ENCODE measurements at regions of chr7 and their contacts with region 1.

Region 1: GRCh38 chr7:99386584-99387238 is 12.2 kb downstream of the ARPC1B start:
- DNase-seq: peak in 2 of 4 experiments; percentile 62 to 74
- ATAC-seq: peak; percentile 93
- H3K4me3 ChIP-seq: no peak overlapping the region
- H3K27ac ChIP-seq: no peak overlapping the region
- H3K4me1 ChIP-seq: peaks cover 0 to 27% of the 10 kb centered on the region in 2 experiments; a peak in 2 of 5 replicates
- H3K27me3 ChIP-seq: no peaks in the 10 kb centered on the region
- CTCF ChIP-seq: peak; percentile 69 to 81 (median 72)
- EP300 ChIP-seq: no peak
- POLR2A ChIP-seq: no peak
- RAD21 ChIP-seq: peak; percentile 71 to 81

Region 2: GRCh38 chr7:99005776-99006175 is 380.9 kb before region 1 on chr7:
- CTCF ChIA-PET with region 1: no interaction called
- POLR2A ChIA-PET with region 1: no interaction called
- in situ Hi-C with region 1: no loop called
- intact Hi-C with region 1: no loop called
- DNase-seq: no peak
- ATAC-seq: no peak
- H3K4me3 ChIP-seq: no peak overlapping the region
- H3K27ac ChIP-seq: no peak overlapping the region
- H3K4me1 ChIP-seq: no peaks in the 10 kb centered on the region
- H3K27me3 ChIP-seq: no peaks in the 10 kb centered on the region
- CTCF ChIP-seq: no peak
- EP300 ChIP-seq: no peak
- POLR2A ChIP-seq: no peak
- RAD21 ChIP-seq: no peak

Region 3: GRCh38 chr7:99143853-99144672 is 242.6 kb before region 1 on chr7 and contains the start of gene SMURF1:
- CTCF ChIA-PET with region 1: no interaction called
- POLR2A ChIA-PET with region 1: no interaction called
- in situ Hi-C with region 1: no loop called
- intact Hi-C with region 1: loop called (anchors 5 kb)
- DNase-seq: peak; percentile 83 to 92 (median 89)
- ATAC-seq: peak; percentile 55
- H3K4me3 ChIP-seq: peak within 1 kb of the TSS; percentile 75
- H3K27ac ChIP-seq: peak within 1 kb of the TSS; percentile 91
- H3K4me1 ChIP-seq: peaks cover 10 to 18% of the 10 kb centered on the region in 2 experiments; a peak in 4 of 5 replicates
- H3K27me3 ChIP-seq: no peaks in the 10 kb centered on the region
- CTCF ChIP-seq: no peak
- EP300 ChIP-seq: no peak
- POLR2A ChIP-seq: peak; percentile 86
- RAD21 ChIP-seq: peak; percentile 13 to 15; a peak in 2 of 4 replicates
- polyA plus RNA-seq, gene SMURF1: 1.0 to 1.3 TPM

Region 4: DNA sequence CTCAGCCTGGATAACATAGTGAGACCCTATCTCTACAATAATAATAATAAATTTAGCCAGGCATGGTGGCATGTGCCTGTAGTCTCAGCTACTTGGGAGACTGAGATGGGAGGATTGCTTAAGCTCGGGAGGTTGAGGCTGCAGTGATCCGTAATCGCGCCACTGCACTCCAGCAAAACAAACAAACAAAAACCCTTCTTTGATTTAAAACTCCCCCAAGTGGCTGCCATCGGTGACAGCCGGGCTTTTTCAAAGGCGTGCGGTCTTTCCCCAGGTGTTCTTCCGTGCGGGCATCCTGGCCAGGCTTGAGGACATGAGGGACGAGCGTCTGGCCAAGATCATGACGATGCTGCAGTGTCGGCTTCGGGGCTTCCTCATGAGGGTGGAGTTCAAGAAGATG is 116.0 kb before region 1 on chr7:
- CTCF ChIA-PET with region 1: interaction called, 4 read pairs
- POLR2A ChIA-PET with region 1: no interaction called
- in situ Hi-C with region 1: no loop called
- intact Hi-C with region 1: loop called (anchors 1 kb)
- DNase-seq: peak in 1 of 4 experiments; percentile 43
- ATAC-seq: peak; percentile 9; the same call in 2 of the 3 replicates
- H3K4me3 ChIP-seq: no peak overlapping the region
- H3K27ac ChIP-seq: no peak overlapping the region
- H3K4me1 ChIP-seq: peaks cover 4 to 8% of the 10 kb centered on the region in 2 experiments; a peak in 3 of 5 replicates
- H3K27me3 ChIP-seq: peaks cover 27 to 69% of the 10 kb centered on the region in 2 experiments; a peak in 4 of 5 replicates
- CTCF ChIP-seq: peak; percentile 25 to 56 (median 45); a peak in 3 of 6 replicates
- EP300 ChIP-seq: no peak
- POLR2A ChIP-seq: no peak
- RAD21 ChIP-seq: peak; percentile 16 to 41; a peak in 2 of 4 replicates

Region 5: GRCh38 chr7:99325545-99326407 is 60.9 kb before region 1 on chr7 and contains the start of gene ARPC1A:
- CTCF ChIA-PET with region 1: no interaction called
- POLR2A ChIA-PET with region 1: interaction called, 3 read pairs
- in situ Hi-C with region 1: no loop called
- intact Hi-C with region 1: loop called (anchors 5 kb)
- DNase-seq: peak; percentile 97 to 100 (median 100)
- ATAC-seq: peak; percentile 93
- H3K4me3 ChIP-seq: peak within 1 kb of the TSS; percentile 85
- H3K27ac ChIP-seq: peak within 1 kb of the TSS; percentile 84
- H3K4me1 ChIP-seq: peaks cover 31 to 33% of the 10 kb centered on the region in 2 experiments
- H3K27me3 ChIP-seq: no peaks in the 10 kb centered on the region
- CTCF ChIP-seq: peak; percentile 44 to 63 (median 45)
- EP300 ChIP-seq: no peak
- POLR2A ChIP-seq: peak; percentile 97
- RAD21 ChIP-seq: peak in 1 of 2 experiments; percentile 6; a peak in 1 of 4 replicates
- polyA plus RNA-seq, gene ARPC1A: 130 to 151 TPM

Region 6: GRCh38 chr7:99364961-99365817 is 21.5 kb before region 1 on chr7:
- CTCF ChIA-PET with region 1: interaction called, 18 read pairs
- POLR2A ChIA-PET with region 1: no interaction called
- in situ Hi-C with region 1: no loop called
- intact Hi-C with region 1: loop called (anchors 1 kb)
- DNase-seq: peak; percentile 75 to 82 (median 79)
- ATAC-seq: peak; percentile 89
- H3K4me3 ChIP-seq: no peak overlapping the region
- H3K27ac ChIP-seq: 0 out of 3 replicates have a peak overlapping the region, but pooled peaks have one; percentile 12
- H3K4me1 ChIP-seq: peaks cover 23 to 33% of the 10 kb centered on the region in 2 experiments
- H3K27me3 ChIP-seq: no peaks in the 10 kb centered on the region
- CTCF ChIP-seq: peak; percentile 77 to 83 (median 78)
- EP300 ChIP-seq: no peak
- POLR2A ChIP-seq: no peak
- RAD21 ChIP-seq: peak; percentile 35 to 75

Region 7: DNA sequence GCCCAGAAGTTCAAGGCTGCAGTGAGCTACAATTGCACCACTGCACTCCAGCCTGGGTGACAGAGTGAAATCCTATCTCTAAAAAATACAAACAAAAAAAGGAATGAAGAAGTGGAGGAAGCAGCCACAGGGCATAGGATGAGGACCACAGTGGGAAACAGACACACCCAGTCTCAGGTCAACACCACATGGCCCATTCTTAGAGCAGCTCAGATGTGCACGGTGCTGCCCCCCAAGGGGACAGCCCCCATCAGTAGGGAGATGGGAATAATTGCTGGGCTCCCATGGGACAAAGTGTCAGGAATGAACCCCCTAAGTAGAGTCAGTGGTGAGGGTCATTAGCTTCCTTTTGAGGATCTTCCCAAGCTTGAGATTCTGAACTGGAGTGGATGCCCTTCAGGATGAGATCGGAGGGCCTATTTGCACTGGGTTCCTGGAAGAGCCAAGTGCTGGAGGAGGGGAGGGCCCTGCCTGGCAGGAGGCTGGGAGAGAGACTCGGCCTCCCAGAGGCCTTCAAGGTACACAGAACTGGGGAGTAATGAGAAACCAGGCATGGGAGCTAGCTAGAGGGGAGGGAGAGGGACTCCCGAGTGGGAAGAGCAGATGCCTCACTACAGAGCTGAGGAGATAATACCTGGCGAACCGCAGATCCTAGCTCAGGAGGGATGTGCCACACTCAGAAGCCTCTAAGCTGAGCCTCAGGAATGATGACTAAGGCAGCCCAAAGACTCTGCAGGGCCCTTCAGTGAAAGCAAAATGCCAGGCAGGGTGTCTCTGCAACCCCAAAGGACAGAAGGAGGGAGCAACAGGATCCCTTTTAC is 12.1 kb after region 1 on chr7:
- CTCF ChIA-PET with region 1: no interaction called
- POLR2A ChIA-PET with region 1: interaction called, 13 read pairs
- in situ Hi-C with region 1: no loop called
- intact Hi-C with region 1: no loop called
- DNase-seq: no peak
- ATAC-seq: 0 out of 3 replicates have a peak, but pooled peaks have one; percentile 2
- H3K4me3 ChIP-seq: no peak overlapping the region
- H3K27ac ChIP-seq: no peak overlapping the region
- H3K4me1 ChIP-seq: peaks cover 0 to 12% of the 10 kb centered on the region in 2 experiments; a peak in 2 of 5 replicates
- H3K27me3 ChIP-seq: no peaks in the 10 kb centered on the region
- CTCF ChIP-seq: no peak
- EP300 ChIP-seq: no peak
- POLR2A ChIP-seq: peak; percentile 45
- RAD21 ChIP-seq: no peak